Posterior vena cava (tissue), 2 donors: ENCODE measurements at regions of chr6 and their contacts with region 1.

Region 1: GRCh38 chr6:30719791-30720737 is at the start of gene TUBB:
- DNase-seq: peak; percentile 99
- total RNA-seq, gene TUBB: 342 to 378 TPM

Region 2: GRCh38 chr6:30568245-30568644 is 151.8 kb before region 1 on chr6:
- intact Hi-C with region 1: no loop called
- DNase-seq: no peak

Region 3: GRCh38 chr6:30626484-30627366 is 93.3 kb before region 1 on chr6 and contains the start of gene ATAT1:
- intact Hi-C with region 1: loop called in 1 of 2 experiments (anchors 10 kb)
- DNase-seq: peak; percentile 97
- total RNA-seq, gene ATAT1: 5.2 to 7.2 TPM

Region 4: DNA sequence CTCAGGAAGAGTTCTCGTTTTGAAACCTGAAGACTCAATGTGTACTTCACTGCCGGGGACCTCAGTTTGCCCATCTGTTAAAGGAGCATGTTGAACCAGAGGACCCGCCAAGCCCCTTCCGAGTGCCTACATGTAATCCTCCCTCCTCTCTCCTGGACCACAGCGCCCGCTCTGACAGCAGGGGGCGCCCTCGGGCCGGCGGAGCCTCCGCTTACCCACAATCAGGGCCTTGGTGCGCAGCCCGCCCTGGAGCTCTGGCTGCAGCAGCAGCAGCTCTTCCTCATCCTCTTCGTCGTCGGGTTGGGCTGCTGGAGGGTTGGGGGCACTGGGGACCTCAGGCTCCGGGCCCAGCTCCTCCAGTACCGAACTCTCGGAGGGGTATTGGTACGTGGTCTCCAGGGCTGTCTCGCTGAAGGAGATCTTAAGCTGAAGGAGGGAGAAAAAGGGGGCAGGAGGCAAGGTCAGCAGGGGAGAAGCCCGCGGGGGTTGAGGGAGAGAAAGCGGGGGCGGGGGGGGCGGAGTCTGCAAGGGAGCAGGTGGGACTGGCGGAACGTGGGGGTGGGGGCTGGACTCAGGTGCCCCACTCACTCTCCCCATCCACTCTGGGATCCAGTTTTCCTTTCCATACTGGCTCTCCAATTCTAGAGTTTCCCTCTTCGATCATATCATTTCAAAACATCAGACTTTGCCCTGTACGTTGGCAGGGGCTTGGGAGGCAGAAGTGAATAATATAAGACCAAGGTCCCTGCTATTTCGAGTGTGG is 40.9 kb before region 1 on chr6:
- intact Hi-C with region 1: loop called (anchors 2 kb)
- DNase-seq: peak; percentile 96

Region 5: GRCh38 chr6:30687659-30688431 is 32.2 kb before region 1 on chr6:
- intact Hi-C with region 1: loop called (anchors 2 kb)
- DNase-seq: peak; percentile 84